ENCODE measurements at regions of chr4 and their contacts with region 1.

Region 1: DNA sequence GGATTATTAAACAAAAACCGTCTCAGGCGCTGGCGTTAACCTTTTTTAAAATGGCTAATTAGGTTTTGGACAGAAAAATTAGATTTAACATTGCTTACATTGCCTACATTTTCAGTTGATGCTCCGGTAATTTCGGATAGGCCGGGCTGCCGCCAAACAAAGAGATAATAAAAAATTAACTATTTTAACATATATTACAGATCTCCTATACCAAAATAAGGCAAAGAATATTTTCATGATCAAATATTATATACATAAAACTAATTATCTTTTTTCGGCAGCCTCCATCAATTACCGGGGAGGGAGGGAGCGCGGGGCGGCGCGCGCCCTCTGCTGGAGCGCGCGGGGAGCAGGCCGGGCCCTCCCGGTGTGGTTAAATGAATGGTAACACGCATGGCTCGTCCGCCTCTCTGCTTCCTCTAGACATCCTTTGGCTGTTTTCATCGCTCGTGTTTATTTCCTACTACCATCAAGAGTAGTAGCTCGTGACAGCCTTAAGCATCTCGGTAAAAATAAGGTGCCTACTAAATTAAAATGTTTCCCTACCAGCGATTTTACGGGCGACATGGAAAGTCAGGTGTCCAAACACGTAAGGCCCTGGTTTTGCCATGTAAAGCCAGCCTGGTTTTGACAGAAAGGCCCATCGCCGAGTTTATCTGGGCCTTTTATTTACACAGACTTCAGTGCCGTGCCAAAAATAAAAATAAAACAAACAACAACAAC is 52.4 kb upstream of the TMEM33 start:
- DNase-seq: peak in 2 of 6 donors; percentile 35 to 83
- ATAC-seq: peak; percentile 81 to 94 (median 89)
- H3K4me3 ChIP-seq: peak overlapping the region in 2 of 4 donors; percentile 25 to 41
- H3K27ac ChIP-seq: no peak overlapping the region
- H3K4me1 ChIP-seq: peaks cover 0 to 15% (median 15%) of the 10 kb centered on the region in 3 donors
- H3K27me3 ChIP-seq: peaks cover 0 to 37% (median 9%) of the 10 kb centered on the region in 4 donors
- CTCF ChIP-seq: peak; percentile 54 to 93 (median 88)

Region 2: GRCh38 chr4:41281038-41281634 is 601.6 kb before region 1 on chr4:
- intact Hi-C with region 1: loop called in 1 of 3 experiments (anchors 10 kb)
- DNase-seq: peak in 3 of 6 donors; percentile 25 to 50 (median 26)
- ATAC-seq: peak; percentile 91 to 99 (median 98)
- H3K4me3 ChIP-seq: no peak overlapping the region
- H3K27ac ChIP-seq: no peak overlapping the region
- H3K4me1 ChIP-seq: no peaks in the 10 kb centered on the region
- H3K27me3 ChIP-seq: no peaks in the 10 kb centered on the region
- CTCF ChIP-seq: peak; percentile 55 to 80 (median 66)

Region 3: GRCh38 chr4:41611881-41612871 is 270.6 kb before region 1 on chr4:
- intact Hi-C with region 1: no loop called
- DNase-seq: peak in 5 of 6 donors; percentile 28 to 50 (median 43)
- ATAC-seq: peak; percentile 83 to 94 (median 88)
- H3K4me3 ChIP-seq: no peak overlapping the region
- H3K27ac ChIP-seq: peak overlapping the region in 3 of 4 donors; percentile 28 to 47 (median 39)
- H3K4me1 ChIP-seq: no peaks in the 10 kb centered on the region
- H3K27me3 ChIP-seq: no peaks in the 10 kb centered on the region
- CTCF ChIP-seq: no peak

Region 4: GRCh38 chr4:41692717-41693345 is 190.0 kb before region 1 on chr4:
- intact Hi-C with region 1: loop called in 2 of 3 experiments (anchors 5 kb)
- DNase-seq: peak; percentile 24 to 67 (median 39)
- ATAC-seq: peak; percentile 92 to 99 (median 98)
- H3K4me3 ChIP-seq: no peak overlapping the region
- H3K27ac ChIP-seq: no peak overlapping the region
- H3K4me1 ChIP-seq: no peaks in the 10 kb centered on the region
- H3K27me3 ChIP-seq: no peaks in the 10 kb centered on the region
- CTCF ChIP-seq: peak; percentile 55 to 86 (median 80)